GM13976 (cell line): ENCODE measurements at regions of chr2 and their contacts with region 1.

Region 1: GRCh38 chr2:121722479-121722878 is 14.2 kb downstream of the NIFK start:
- DNase-seq: no peak
- CTCF ChIP-seq: no peak

Region 2: DNA sequence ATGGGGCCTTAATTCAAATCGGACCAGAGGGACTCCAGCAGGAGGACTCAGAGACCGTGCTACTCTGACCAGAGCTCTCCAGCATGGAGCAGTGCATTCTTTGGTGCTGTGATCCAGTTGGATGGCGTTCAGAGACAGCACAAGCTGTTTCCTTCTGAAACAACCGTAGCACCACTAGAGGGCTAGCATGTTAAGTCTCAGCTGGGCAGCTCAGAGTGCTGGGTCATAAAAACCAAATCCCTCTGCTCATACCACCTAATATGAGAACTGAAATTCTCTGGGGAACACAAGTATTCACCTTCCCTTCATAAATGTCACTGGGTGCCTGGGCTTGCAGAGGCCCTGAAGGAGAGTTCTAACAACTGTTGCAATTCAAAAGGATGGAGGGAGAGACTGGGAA is 339.7 kb before region 1 on chr2:
- in situ Hi-C with region 1: loop called (anchors 10 kb)
- DNase-seq: no peak
- CTCF ChIP-seq: no peak

Region 3: GRCh38 chr2:121530212-121530705 is 192.2 kb before region 1 on chr2:
- in situ Hi-C with region 1: loop called (anchors 10 kb)
- DNase-seq: peak; percentile 87
- CTCF ChIP-seq: no peak

Region 4: DNA sequence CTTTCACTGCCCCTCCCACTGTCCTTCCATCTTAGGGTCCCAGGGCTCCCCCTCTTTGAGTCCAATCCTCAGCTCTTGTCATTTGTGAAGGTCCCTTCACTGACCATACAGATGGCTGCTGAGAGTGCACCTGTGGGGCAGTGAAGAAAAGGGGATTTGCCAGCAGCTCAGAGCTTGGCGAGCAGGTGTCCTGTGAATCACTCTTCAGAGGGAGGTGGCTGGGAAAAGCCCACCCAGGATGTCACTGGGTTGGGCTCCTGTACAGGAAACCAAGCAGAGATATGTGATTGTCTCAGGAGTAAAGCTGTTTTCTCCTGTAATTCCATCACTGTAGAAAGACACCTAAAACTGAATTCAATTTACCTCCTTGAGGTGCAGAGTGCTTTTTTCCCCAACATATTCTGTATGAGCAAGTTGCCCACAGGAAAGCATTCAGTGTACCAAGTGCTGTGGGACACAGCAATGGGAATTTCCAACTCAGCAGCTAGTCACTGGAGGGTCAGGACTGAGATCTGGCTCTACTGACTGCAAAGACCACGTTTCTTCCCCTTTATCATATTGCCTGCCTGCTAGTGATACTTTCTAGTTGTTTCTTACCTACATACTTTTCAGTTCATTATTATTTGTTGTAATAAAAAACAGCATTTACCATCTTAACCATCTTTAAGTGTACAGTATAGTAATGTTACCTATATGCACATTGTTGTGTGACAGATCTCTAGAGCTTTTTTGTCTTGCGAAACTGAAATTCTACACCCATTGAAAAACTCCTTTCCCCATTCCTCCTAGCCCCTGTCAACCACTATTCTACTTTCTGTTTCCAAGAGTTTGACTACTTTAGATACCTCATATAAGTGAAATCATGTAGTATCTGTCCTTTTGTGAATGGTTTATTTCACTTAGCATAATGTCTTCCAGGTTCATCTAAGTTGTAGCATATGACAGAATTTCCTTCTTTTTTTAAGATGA is 272.0 kb after region 1 on chr2:
- in situ Hi-C with region 1: no loop called
- DNase-seq: no peak
- CTCF ChIP-seq: no peak